Right lobe of liver (tissue), 6 donors: ENCODE measurements at regions of chr16 and their contacts with region 1.

Region 1: DNA sequence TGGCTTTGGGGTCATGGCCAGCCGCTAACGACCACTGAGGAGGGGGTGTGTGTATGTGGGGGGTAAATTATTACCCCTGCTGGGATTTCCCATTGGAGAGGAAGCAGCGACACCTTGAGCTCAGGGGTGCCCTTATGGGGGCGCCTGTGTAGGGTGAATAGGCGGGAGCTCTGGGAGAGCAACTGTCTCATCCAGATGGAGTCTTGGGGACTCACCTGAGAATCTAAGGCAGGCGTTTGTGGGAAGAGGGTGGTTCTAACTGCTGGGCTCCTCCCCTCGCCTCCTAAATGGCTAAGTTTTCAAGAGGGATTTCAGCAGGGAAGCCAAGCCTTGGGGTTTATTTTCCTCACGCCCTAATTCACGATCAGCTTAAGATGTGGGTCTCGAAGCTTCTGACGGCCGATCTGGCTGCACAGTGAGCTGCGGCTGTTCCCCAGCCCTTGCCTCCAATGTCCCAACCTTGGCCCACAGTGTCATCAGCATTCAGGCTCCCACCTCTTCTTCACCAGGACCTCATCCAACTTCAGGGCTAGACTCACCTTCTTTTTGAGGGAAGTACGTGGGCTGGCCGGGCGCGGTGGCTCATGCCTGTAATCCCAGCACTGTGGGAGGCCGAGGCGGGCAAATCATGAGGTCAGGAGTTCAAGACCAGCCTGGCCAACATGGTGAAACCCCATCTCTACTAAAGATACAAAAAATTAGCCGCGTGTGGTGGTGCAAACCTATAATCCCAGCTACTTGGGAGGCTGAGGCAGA is 136.9 kb upstream of the EEF2KMT start:
- DNase-seq: no peak
- ATAC-seq: no peak
- H3K4me3 ChIP-seq: no peak overlapping the region
- H3K27ac ChIP-seq: no peak overlapping the region
- H3K4me1 ChIP-seq: no peaks in the 10 kb centered on the region
- H3K27me3 ChIP-seq: no peaks in the 10 kb centered on the region
- CTCF ChIP-seq: no peak
- POLR2A ChIP-seq: no peak

Region 2: GRCh38 chr16:5175266-5175665 is 59.2 kb before region 1 on chr16:
- intact Hi-C with region 1: no loop called
- DNase-seq: no peak
- ATAC-seq: no peak
- H3K4me3 ChIP-seq: no peak overlapping the region
- H3K27ac ChIP-seq: no peak overlapping the region
- H3K4me1 ChIP-seq: no peaks in the 10 kb centered on the region
- H3K27me3 ChIP-seq: no peaks in the 10 kb centered on the region
- CTCF ChIP-seq: no peak
- POLR2A ChIP-seq: no peak

Region 3: DNA sequence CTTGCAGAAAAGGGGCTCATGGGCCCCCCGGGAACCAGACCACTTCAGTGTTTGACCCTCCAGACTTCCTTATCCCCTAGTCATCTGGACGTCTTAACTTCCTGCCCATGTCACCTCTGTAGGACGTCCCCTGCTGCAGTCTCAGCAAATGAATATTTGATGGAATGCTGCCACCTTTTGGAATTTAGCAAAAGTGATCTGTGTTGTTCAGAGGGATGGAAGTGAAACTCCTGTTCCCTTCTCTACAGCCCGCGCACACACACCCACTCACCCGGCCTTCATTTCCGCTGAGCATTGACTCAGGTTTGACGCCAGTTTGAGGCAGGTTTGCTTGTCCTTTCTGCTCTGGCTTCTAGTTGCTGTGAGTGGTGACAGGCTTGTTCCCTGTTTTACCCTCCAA is 370.3 kb after region 1 on chr16:
- intact Hi-C with region 1: loop called in 1 of 2 experiments (anchors 10 kb)
- DNase-seq: no peak
- ATAC-seq: peak in 3 of 4 donors; percentile 24 to 46 (median 38)
- H3K4me3 ChIP-seq: no peak overlapping the region
- H3K27ac ChIP-seq: no peak overlapping the region
- H3K4me1 ChIP-seq: no peaks in the 10 kb centered on the region
- H3K27me3 ChIP-seq: no peaks in the 10 kb centered on the region
- CTCF ChIP-seq: peak in 1 of 4 donors; percentile 8
- POLR2A ChIP-seq: no peak